ENCODE measurements at regions of chr16 and their contacts with region 1.

Region 1: DNA sequence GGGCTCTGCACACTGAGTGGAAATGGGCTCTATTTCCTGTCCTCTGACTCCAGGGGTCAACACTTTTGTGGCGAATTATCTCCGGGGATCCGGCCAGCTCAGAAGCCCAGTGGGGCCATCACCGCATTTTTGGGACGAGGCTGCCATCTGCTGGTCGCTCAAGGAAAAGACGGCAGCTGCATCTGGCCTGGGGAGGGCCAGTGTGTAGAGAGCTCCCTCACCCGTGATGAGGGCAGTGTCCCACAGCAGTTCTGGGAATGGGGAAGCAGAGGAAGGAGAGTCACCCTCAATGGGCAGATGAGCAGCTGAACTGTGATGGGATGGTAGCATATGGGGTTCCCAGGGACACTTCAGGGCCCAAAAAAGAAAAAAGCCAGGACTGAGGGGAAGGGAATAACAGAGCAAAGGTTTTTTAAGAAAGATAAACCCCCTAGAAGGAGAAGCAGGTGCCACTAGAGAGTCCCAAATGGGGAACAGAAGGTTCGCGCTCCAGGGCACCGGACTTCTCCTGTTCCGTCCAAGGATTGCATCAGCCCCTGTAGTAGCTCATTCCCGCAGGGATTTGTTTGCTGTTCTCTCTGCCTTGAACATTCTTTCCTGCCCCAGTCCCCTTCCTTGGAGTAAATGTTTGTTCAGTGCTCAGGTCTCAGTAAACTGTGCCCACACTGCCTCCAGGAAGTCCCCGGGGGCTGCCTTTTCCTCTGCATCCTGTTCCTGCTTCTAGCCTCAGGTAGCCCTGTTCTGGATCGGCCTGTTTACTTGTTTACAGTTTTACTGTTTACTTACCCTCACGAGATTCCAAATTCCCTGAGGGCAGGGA is 9.3 kb upstream of the ABCC12 start:
- DNase-seq: peak; percentile 71
- ATAC-seq: peak; percentile 96
- H3K4me3 Mint-ChIP-seq: no peak overlapping the region
- H3K27ac Mint-ChIP-seq: no peak overlapping the region
- H3K4me1 Mint-ChIP-seq: peaks cover 11% of the 10 kb centered on the region
- H3K27me3 Mint-ChIP-seq: peaks cover 2% of the 10 kb centered on the region

Region 2: GRCh38 chr16:46947900-46948547 is 1217.1 kb before region 1 on chr16:
- CTCF ChIA-PET with region 1: interaction called, 10 read pairs
- POLR2A ChIA-PET with region 1: no interaction called
- DNase-seq: peak; percentile 60
- ATAC-seq: peak; percentile 71
- H3K4me3 Mint-ChIP-seq: no peak overlapping the region
- H3K27ac Mint-ChIP-seq: no peak overlapping the region
- H3K4me1 Mint-ChIP-seq: peaks cover 9% of the 10 kb centered on the region
- H3K27me3 Mint-ChIP-seq: no peaks in the 10 kb centered on the region

Region 3: GRCh38 chr16:48182979-48183537 is 17.9 kb after region 1 on chr16:
- CTCF ChIA-PET with region 1: interaction called, 10 read pairs
- POLR2A ChIA-PET with region 1: no interaction called
- DNase-seq: no peak
- ATAC-seq: no peak
- H3K4me3 Mint-ChIP-seq: no peak overlapping the region
- H3K27ac Mint-ChIP-seq: no peak overlapping the region
- H3K4me1 Mint-ChIP-seq: peaks cover 2% of the 10 kb centered on the region
- H3K27me3 Mint-ChIP-seq: peaks cover 7% of the 10 kb centered on the region

Region 4: GRCh38 chr16:48365581-48366164 is 200.6 kb after region 1 on chr16:
- CTCF ChIA-PET with region 1: no interaction called
- POLR2A ChIA-PET with region 1: no interaction called
- DNase-seq: peak; percentile 86
- ATAC-seq: peak; percentile 98
- H3K4me3 Mint-ChIP-seq: peak overlapping the region; percentile 93
- H3K27ac Mint-ChIP-seq: peak overlapping the region; percentile 98
- H3K4me1 Mint-ChIP-seq: peaks cover 46% of the 10 kb centered on the region
- H3K27me3 Mint-ChIP-seq: no peaks in the 10 kb centered on the region